Activated T-helper 2 cell treated with anti-CD3 and anti-CD28 coated beads, Interferon-gamma antibody, Interleukin-2, Interleukin-4, amounts not matched to agents 10 μg/mL and 5 μg/mL and 100 μg/mL, durations not matched to agents 14 hours and 24 hours and 36 hours (primary cell): ENCODE measurements at regions of chr13 and their contacts with region 1.

Region 1: DNA sequence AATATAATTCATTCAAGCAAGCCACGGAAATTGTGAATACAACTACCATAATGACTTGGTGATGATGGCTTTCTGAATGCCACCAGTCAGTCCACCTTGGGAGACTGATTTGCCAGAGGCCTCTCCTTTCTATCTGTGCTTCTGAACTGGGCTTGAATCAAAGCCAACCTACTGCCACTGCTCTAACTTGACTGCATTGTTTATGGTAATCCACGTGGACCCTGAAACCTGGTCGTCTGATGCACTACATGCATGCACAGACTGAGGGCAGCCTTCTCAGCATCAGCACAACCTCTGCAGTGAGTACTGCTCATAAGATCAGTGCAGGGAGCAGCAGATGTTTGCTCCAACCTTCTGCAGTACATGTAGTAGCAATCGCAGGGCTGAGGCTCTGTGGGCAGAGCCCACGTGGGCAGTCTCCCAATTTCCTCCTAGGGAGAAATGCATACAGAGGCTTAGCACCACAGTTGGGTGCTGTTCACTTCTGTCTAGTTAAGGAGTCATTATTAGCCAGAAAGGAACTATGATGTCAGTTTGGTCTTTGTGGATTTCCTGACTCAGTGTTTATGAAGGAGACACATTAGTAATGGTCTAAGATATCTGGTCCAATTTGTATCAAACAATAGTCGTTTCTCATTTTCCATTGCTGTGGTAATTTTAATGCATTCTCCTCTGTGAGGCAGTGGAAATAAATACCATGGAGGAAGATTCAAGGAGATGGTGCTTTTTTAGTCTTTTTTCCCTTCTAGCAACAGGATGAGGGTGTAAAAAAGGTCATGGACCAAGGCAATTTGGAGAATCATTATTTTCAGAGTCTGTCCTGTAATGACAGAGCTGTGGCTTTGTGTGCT is 82.5 kb downstream of the AKAP11 start:
- DNase-seq: no peak
- H3K4me3 Mint-ChIP-seq: peak overlapping the region; percentile 77
- H3K27ac Mint-ChIP-seq: peak overlapping the region; percentile 100
- H3K4me1 Mint-ChIP-seq: peaks cover 64% of the 10 kb centered on the region
- H3K27me3 Mint-ChIP-seq: no peaks in the 10 kb centered on the region

Region 2: DNA sequence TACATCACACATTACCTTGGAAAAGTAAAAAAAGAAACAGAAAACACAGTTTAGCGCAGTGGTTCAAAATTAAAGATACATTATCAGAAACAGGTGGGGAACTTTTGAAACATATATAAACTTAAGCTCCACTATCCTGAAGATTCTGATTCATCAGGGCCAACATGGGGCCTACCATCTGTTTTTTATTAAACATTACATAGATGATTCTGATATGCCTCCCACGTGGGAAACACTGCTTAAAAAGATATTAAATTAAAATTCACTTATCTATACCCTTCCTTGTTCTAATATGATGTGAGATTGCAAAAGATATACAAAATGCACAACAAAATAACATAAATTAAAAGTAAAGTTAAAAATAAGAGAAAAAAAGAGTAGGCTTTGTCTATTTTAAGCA is 518.6 kb before region 1 on chr13:
- intact Hi-C with region 1: no loop called
- DNase-seq: no peak
- H3K4me3 Mint-ChIP-seq: no peak overlapping the region
- H3K27ac Mint-ChIP-seq: no peak overlapping the region
- H3K4me1 Mint-ChIP-seq: peaks cover 2% of the 10 kb centered on the region
- H3K27me3 Mint-ChIP-seq: no peaks in the 10 kb centered on the region

Region 3: DNA sequence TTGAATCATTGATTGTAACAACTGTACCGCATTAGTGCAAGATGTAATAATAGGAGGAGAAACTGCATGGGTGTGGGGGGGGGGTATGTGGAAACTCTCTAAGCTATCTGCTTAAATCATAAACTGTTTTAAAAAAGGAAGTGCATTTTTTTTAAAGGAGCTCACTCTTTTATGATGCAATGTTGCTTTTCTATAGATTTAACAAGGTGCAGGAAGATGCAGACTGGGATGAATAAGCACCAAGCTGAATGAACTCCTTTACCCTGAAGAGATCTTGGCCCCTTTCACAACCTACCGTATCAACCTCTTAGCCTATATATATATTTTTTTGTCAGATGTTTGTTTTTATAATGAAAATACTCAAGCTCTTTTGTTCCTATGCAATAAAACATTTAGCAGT is 13.4 kb after region 1 on chr13:
- intact Hi-C with region 1: loop called (anchors 1 kb)
- DNase-seq: no peak
- H3K4me3 Mint-ChIP-seq: no peak overlapping the region
- H3K27ac Mint-ChIP-seq: no peak overlapping the region
- H3K4me1 Mint-ChIP-seq: peaks cover 61% of the 10 kb centered on the region
- H3K27me3 Mint-ChIP-seq: no peaks in the 10 kb centered on the region

Region 4: GRCh38 chr13:42405665-42406390 is 51.4 kb after region 1 on chr13:
- intact Hi-C with region 1: loop called (anchors 1 kb)
- DNase-seq: no peak
- H3K4me3 Mint-ChIP-seq: peak overlapping the region; percentile 62
- H3K27ac Mint-ChIP-seq: peak overlapping the region; percentile 96
- H3K4me1 Mint-ChIP-seq: peaks cover 68% of the 10 kb centered on the region
- H3K27me3 Mint-ChIP-seq: no peaks in the 10 kb centered on the region

Region 5: GRCh38 chr13:42466123-42466522 is 111.7 kb after region 1 on chr13:
- intact Hi-C with region 1: no loop called
- DNase-seq: no peak
- H3K4me3 Mint-ChIP-seq: no peak overlapping the region
- H3K27ac Mint-ChIP-seq: no peak overlapping the region
- H3K4me1 Mint-ChIP-seq: peaks cover 17% of the 10 kb centered on the region
- H3K27me3 Mint-ChIP-seq: no peaks in the 10 kb centered on the region

Region 6: DNA sequence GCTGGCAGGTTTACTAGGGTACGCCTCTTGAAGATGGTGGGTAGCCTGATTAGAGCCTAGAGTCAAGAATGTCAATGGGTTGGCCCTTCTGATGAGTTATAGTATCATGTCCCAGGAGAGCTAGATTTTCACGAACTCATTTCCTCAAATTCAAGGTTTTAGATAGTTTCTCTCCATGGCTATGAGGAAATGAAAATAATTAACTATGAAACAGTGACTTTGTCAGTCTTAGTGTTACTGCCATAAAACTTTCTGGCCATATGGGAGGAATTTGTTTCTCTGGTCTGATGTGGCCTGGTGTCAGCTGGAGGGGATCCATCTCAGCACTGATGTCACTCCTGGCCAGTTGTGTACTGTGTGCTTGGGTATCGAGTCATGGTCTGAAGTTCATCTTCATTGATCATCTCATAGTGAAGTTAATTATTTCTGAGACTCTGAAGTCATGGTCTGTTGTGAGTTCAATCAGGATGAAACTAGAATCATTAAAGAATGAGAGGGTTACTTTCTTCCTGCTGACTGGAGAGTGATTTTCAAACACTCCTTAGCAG is 170.1 kb after region 1 on chr13:
- intact Hi-C with region 1: no loop called
- DNase-seq: no peak
- H3K4me3 Mint-ChIP-seq: no peak overlapping the region
- H3K27ac Mint-ChIP-seq: no peak overlapping the region
- H3K4me1 Mint-ChIP-seq: no peaks in the 10 kb centered on the region
- H3K27me3 Mint-ChIP-seq: no peaks in the 10 kb centered on the region

Region 7: DNA sequence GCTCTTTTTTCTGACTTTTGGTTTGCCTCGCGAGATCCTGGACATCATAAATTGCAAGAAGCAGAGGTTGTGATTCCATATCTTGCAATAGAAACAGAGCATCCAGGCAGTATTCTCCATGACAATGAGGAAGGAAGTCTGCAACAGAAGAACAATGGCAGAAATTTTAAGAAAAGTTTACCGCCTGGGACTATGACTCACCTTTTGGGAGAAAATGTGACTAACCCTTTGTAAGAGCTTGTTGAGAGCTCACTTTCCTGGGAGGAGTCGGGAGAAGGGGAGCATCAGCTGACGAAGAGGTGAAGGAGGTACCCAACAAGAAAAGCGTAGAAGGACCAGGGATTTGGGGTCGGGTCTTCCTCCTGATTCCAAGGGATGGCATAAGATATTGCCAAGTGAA is 185.2 kb after region 1 on chr13:
- intact Hi-C with region 1: no loop called
- DNase-seq: no peak
- H3K4me3 Mint-ChIP-seq: no peak overlapping the region
- H3K27ac Mint-ChIP-seq: no peak overlapping the region
- H3K4me1 Mint-ChIP-seq: peaks cover 3% of the 10 kb centered on the region
- H3K27me3 Mint-ChIP-seq: no peaks in the 10 kb centered on the region

Region 8: GRCh38 chr13:42574435-42575311 is 220.2 kb after region 1 on chr13:
- intact Hi-C with region 1: loop called (anchors 1 kb)
- DNase-seq: peak; percentile 30
- H3K4me3 Mint-ChIP-seq: peak overlapping the region; percentile 74
- H3K27ac Mint-ChIP-seq: peak overlapping the region; percentile 75
- H3K4me1 Mint-ChIP-seq: peaks cover 43% of the 10 kb centered on the region
- H3K27me3 Mint-ChIP-seq: peaks cover 5% of the 10 kb centered on the region